ENCODE measurements at regions of chr12 and their contacts with region 1.

Region 1: DNA sequence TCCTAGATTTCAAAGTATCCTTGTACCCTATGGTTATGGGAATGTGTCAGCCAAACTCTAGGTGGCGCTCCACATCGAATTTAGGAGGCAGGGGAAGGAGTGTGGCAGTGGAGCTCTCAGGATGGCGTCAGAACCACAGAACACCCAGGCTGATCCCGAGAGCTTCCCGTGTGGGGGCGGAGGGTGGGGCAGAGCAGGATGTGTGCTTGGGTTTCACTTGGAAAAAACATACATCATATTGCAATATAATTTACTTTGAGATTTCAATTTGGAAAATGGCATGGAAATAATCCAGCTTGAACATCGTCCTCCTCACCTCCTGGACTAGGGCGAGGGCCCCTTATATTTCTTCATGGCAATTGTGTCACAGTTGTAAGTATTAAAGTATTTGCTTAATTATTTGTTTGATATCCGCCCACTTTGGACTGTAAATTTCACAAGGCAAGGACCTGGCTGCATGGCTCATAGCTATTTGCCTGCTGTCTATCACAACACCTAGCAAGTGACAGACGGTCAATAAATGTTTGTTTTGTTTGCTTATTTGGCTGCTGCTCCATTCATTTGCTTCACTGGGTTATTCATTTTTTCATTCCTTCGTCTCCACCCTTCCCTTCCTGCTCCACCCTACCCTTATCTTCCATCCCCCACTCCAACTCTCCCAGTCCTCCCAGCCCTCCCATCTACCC is 221.5 kb upstream of the HMGA2 start:
- DNase-seq: no peak
- ATAC-seq: peak; percentile 94
- H3K4me3 ChIP-seq: no peak overlapping the region
- H3K27ac ChIP-seq: no peak overlapping the region
- H3K4me1 ChIP-seq: no peaks in the 10 kb centered on the region
- H3K27me3 ChIP-seq: peaks cover 0 to 3% of the 10 kb centered on the region in 2 experiments; a peak in 1 of 4 replicates
- CTCF ChIP-seq: peak; percentile 68 to 73 (median 70)
- EP300 ChIP-seq: no peak
- POLR2A ChIP-seq: no peak
- RAD21 ChIP-seq: peak; percentile 90

Region 2: DNA sequence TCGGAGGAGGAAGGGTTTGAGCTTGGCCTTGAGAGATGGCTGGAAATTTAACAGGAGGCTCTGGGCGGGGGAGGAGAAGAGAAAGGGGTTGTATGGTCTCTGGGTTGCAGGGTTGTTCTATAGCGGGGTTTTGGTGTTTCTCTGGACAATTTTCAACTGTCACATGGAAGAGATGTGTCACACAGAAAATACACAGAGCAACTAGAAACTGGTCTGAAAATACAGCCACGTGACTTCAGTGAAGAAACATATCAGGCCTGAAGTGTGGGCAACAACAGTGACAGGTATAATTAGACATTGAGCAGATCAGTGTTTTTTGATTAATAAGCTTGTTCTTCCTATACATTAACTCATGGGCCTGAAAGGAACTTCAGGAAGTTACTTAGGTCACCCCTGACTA is 16.3 kb after region 1 on chr12:
- CTCF ChIA-PET with region 1: interaction called, 10 read pairs
- POLR2A ChIA-PET with region 1: no interaction called
- RAD21 ChIA-PET with region 1: interaction called, 3 read pairs
- SMC1A ChIA-PET with region 1: interaction called, 3 read pairs
- in situ Hi-C with region 1: no loop called
- intact Hi-C with region 1: no loop called
- DNase-seq: no peak
- ATAC-seq: peak; percentile 77
- H3K4me3 ChIP-seq: no peak overlapping the region
- H3K27ac ChIP-seq: no peak overlapping the region
- H3K4me1 ChIP-seq: peaks cover 3% of the 10 kb centered on the region; the same call in 1 of the 2 replicates
- H3K27me3 ChIP-seq: no peaks in the 10 kb centered on the region
- CTCF ChIP-seq: no peak
- EP300 ChIP-seq: no peak
- POLR2A ChIP-seq: no peak
- RAD21 ChIP-seq: no peak

Region 3: DNA sequence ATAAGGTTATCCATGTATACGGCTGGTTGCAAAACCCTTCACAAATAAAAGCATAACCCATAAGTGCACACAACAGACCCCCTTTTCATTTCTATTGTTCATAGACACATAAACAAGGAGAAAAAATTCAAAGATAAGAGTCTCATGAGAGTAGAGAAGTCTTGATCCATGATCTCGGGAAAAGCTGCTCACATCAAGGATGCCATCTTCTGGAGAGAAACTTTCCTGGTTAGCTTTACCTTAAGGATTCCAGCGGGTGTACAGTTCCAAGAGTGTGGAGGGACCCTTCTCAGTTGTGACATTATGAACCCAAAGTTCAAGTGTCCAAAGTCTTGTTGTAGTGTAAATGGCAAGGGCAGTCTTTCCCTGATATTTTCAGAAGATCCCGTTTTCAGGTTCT is 383.3 kb after region 1 on chr12:
- CTCF ChIA-PET with region 1: interaction called, 14 read pairs
- POLR2A ChIA-PET with region 1: no interaction called
- RAD21 ChIA-PET with region 1: interaction called, 8 read pairs
- SMC1A ChIA-PET with region 1: interaction called, 4 read pairs
- in situ Hi-C with region 1: no loop called
- intact Hi-C with region 1: loop called (anchors 5 kb)
- DNase-seq: no peak
- ATAC-seq: no peak
- H3K4me3 ChIP-seq: no peak overlapping the region
- H3K27ac ChIP-seq: no peak overlapping the region
- H3K4me1 ChIP-seq: no peaks in the 10 kb centered on the region
- H3K27me3 ChIP-seq: no peaks in the 10 kb centered on the region
- CTCF ChIP-seq: no peak
- EP300 ChIP-seq: no peak
- POLR2A ChIP-seq: no peak
- RAD21 ChIP-seq: no peak

Region 4: DNA sequence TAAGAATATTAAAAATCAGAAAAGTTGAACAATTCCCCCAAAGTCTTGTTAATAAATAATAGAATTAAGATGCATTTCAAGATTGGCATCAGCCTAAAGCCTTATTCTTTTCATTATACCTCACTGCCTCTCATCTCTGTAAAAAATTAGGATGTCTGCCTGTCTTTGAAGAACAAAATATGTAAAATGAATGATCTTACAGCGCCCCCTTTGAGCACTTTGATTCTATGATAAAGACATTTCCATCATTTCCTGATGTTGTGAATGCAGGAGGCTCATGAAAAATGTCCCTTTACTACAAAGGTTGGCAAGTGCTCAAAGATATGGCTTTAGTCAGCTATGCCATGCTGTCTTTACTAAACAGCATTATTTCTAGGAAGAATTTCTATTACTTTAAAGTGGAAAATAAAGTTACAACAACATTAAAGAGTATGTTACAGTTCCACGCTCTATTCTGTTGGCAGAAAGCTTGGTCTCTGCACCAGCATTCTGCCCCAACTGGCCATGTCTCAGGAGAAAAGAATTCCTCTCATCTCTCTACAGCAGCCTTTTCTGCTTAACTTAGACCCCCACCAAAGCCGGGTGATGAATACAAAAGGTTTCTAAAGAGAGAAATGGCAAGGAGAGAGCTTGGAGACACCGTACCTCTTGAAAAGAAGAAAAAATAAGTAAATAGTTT is 432.7 kb after region 1 on chr12:
- CTCF ChIA-PET with region 1: interaction called, 12 read pairs
- POLR2A ChIA-PET with region 1: no interaction called
- RAD21 ChIA-PET with region 1: no interaction called
- SMC1A ChIA-PET with region 1: interaction called, 8 read pairs
- in situ Hi-C with region 1: no loop called
- intact Hi-C with region 1: no loop called
- DNase-seq: no peak
- ATAC-seq: peak; percentile 20; the same call in 1 of the 3 replicates
- H3K4me3 ChIP-seq: no peak overlapping the region
- H3K27ac ChIP-seq: no peak overlapping the region
- H3K4me1 ChIP-seq: peaks cover 12% of the 10 kb centered on the region; the same call in 1 of the 2 replicates
- H3K27me3 ChIP-seq: no peaks in the 10 kb centered on the region
- CTCF ChIP-seq: peak in 2 of 3 experiments; percentile 28 to 34; a peak in 3 of 6 replicates
- EP300 ChIP-seq: no peak
- POLR2A ChIP-seq: no peak
- RAD21 ChIP-seq: peak; percentile 58